AG04449 (cell line): ENCODE measurements at regions of chr9 and their contacts with region 1.

Region 1: DNA sequence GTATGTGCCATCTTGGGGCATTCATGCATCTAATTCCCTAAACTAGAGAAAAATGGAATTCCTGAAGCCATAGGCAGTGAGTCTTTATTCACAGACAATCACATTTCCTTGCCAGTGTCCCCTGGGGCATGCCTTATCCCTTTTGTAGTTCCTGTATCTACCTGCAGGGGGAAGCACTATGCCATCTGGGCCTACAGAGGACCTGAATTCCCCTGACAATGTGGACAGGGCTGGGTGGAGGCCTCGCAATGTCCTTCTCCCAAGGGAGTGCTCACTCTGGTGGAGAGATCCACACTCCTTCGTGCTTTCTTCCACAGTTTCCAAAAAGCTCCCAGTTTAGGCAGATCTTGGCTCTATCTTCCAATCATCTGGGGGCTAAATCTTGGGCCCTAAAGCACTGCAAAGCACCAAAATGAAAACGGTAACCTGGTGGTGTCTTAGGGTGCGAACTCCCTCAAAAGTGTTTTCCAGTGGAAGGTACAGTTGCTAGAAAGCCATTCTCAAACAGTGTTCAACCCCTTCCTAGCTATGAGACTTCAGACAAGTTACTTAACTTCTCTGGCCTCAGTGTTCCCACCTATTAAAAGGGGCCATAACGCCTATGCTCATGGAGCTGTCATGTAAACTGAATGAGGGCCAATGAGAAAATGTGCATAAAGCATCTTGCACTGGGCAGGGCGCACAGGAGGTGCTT is 17.5 kb downstream of the WHRN start:
- DNase-seq: peak; percentile 5
- H3K4me3 ChIP-seq: no peak overlapping the region
- CTCF ChIP-seq: peak; percentile 87

Region 2: DNA sequence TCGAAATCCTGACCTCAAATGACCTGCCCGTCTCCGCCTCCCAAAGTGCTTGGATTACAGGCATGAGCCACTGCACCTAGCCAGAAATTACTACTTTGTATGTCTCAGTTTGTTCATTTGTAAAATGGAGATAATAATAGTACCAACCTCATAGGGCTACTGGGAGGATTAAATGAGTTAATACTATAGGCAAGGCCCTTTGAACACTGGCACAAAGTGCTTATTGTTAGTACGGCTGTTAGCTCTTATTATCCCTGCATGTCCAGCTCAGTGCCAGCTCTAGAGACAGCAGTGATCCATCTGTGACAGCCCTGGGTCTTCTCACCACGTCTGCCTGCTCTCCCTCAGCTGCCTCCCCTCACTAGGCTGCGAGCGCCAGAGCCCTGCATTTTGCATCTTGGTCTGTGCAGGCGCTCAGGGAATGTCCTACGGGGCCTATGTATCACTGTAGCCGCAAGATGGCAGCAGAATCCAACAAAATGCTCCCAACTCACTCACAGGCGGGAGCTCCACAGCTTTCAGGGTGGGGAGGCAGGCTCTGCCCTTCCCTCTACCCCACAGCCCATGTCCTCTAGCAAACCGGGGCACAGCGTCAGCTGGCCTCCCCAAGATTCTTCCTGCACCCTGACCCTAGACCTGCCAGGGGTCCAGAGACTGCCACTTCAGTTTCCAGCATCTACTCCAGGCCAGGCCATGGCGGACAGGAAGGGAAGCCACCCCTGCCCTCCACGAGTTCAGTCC is 82.3 kb before region 1 on chr9:
- CTCF ChIA-PET with region 1: interaction called, 36 read pairs
- POLR2A ChIA-PET with region 1: no interaction called
- DNase-seq: no peak
- H3K4me3 ChIP-seq: no peak overlapping the region
- CTCF ChIP-seq: peak; percentile 82

Region 3: GRCh38 chr9:114472765-114473446 is 14.8 kb before region 1 on chr9:
- CTCF ChIA-PET with region 1: interaction called, 48 read pairs
- POLR2A ChIA-PET with region 1: no interaction called
- DNase-seq: no peak
- H3K4me3 ChIP-seq: no peak overlapping the region
- CTCF ChIP-seq: no peak

Region 4: GRCh38 chr9:114505187-114506081 is 17.7 kb after region 1 on chr9 and contains the start of gene WHRN:
- CTCF ChIA-PET with region 1: interaction called, 51 read pairs
- POLR2A ChIA-PET with region 1: no interaction called
- DNase-seq: no peak
- H3K4me3 ChIP-seq: peak within 1 kb of the TSS; percentile 70
- CTCF ChIP-seq: no peak

Region 5: GRCh38 chr9:114587385-114588202 is 99.8 kb after region 1 on chr9 and contains the start of gene ATP6V1G1:
- CTCF ChIA-PET with region 1: interaction called, 12 read pairs
- POLR2A ChIA-PET with region 1: interaction called, 3 read pairs
- DNase-seq: peak; percentile 94
- H3K4me3 ChIP-seq: peak within 1 kb of the TSS; percentile 99
- CTCF ChIP-seq: peak; percentile 29

Region 6: GRCh38 chr9:114621975-114622609 is 134.3 kb after region 1 on chr9:
- CTCF ChIA-PET with region 1: interaction called, 11 read pairs
- POLR2A ChIA-PET with region 1: no interaction called
- DNase-seq: no peak
- H3K4me3 ChIP-seq: no peak overlapping the region
- CTCF ChIP-seq: no peak

Region 7: DNA sequence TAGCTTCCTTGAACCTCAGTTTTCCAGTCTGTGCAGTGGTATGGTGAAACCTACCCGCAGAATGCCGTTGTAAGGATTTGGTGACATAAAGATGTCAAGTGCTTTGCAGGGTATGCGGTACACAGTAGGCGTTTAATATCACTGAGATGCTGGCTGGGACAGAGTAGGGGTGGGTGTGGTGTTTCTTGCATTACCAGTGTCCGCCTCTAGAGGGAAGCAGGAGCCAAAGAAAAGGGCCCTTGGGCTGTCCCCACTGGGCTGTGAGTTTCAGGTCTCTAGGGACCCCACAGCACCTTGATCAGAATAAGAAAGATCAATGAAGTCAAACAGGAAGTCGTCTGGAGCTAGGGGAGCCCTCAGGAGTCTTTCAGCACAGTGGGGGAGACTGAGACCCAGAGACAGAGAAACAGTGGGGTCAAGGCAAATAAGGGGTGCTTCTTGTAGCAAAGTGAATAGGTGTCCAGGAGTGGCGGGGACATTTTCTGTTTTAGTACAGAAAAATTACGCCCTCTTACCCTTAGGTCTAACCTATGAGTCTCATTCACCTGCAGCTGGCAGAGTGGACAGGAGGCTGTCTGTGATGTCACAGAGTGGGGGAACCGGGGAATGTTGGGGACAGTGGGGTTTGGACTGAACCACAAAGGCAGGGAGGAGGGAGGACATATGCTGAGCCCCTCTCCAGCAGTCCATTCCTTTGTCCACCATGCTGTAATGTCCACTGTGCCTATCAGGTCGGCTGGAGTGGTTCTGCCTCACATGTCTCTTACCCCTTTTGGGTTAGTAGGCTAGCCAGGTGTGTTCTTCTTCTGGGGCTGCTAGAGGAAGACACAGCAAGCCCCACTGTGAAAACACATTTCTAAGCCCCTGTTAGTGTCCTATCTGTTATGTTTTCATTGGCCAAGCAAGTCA is 174.6 kb after region 1 on chr9:
- CTCF ChIA-PET with region 1: interaction called, 11 read pairs
- POLR2A ChIA-PET with region 1: no interaction called
- DNase-seq: no peak
- H3K4me3 ChIP-seq: no peak overlapping the region
- CTCF ChIP-seq: peak; percentile 76

Region 8: GRCh38 chr9:114745108-114745848 is 257.5 kb after region 1 on chr9:
- CTCF ChIA-PET with region 1: no interaction called
- POLR2A ChIA-PET with region 1: no interaction called
- DNase-seq: no peak
- H3K4me3 ChIP-seq: no peak overlapping the region
- CTCF ChIP-seq: no peak